ENCODE measurements at regions of chr1 and their contacts with region 1.

Region 1: DNA sequence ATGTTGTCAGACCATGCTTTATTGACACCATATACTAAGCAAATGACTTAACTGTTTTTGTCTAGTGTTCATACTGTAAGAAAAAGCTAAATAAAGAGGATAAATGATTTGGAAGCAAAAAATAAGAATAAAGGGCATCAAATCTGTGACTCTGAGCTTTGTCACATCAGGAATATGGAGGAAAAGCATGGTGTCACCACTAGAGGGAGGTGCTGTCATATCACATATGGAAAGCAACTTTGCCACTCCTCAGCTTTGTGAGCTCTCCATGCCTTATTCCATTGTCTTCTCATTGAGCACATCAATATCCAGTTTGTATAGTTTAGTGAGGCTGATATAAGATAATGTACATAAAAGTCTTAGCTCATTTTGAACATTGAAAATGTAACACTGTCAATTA is 20.8 kb upstream of the GBP1 start:
- DNase-seq: peak; percentile 41
- H3K4me3 Mint-ChIP-seq: no peak overlapping the region
- H3K27ac Mint-ChIP-seq: no peak overlapping the region
- H3K4me1 Mint-ChIP-seq: peaks cover 6% of the 10 kb centered on the region
- H3K27me3 Mint-ChIP-seq: no peaks in the 10 kb centered on the region

Region 2: DNA sequence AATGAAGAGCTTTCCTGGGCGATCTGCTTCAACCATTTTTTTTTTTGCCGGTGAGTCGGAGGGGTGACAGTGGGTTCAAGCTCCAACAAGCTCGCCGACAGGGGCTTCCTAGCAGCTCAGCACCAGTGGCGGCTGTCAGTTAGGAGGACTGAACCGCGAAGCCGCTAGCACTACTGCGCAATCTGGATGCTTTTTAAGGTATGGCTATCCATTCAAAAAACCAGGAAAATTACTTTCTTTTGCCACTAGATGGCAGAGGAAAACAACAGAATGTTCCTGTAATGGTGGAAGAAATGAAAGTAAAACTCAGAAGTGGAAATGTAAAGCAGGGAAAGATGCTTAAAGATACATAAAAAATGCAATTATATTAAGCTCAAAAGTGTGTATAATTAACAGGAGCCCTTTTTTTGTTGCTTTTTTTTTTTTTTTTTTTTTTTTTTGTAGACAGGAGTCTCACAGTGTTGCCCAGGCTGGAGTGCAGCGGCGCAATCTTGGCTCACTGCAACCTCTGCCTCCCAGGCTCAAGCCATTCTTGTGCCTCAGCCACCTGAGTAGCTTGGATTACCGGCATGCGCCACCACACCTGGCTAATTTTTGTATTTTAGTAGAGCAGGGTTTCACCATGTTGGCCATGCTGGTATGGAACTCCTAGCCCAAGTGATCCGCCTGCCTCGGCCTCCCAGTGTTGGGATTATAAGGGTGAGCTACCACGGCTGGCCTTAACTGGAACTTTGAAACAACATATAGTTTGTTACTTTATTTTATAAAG is 101.8 kb before region 1 on chr1:
- CTCF ChIA-PET with region 1: interaction called, 10 read pairs
- POLR2A ChIA-PET with region 1: no interaction called
- DNase-seq: peak; percentile 32
- H3K4me3 Mint-ChIP-seq: peak overlapping the region; percentile 61
- H3K27ac Mint-ChIP-seq: peak overlapping the region; percentile 65
- H3K4me1 Mint-ChIP-seq: peaks cover 83% of the 10 kb centered on the region
- H3K27me3 Mint-ChIP-seq: no peaks in the 10 kb centered on the region

Region 3: GRCh38 chr1:89065079-89065868 is 20.5 kb before region 1 on chr1 and contains the start of gene GBP1:
- CTCF ChIA-PET with region 1: interaction called, 10 read pairs
- POLR2A ChIA-PET with region 1: no interaction called
- DNase-seq: no peak
- H3K4me3 Mint-ChIP-seq: peak within 1 kb of the TSS; percentile 96
- H3K27ac Mint-ChIP-seq: peak within 1 kb of the TSS; percentile 88
- H3K4me1 Mint-ChIP-seq: peaks cover 59% of the 10 kb centered on the region
- H3K27me3 Mint-ChIP-seq: no peaks in the 10 kb centered on the region
- total RNA-seq, gene GBP1: 141 to 144 TPM

Region 4: GRCh38 chr1:89358287-89358893 is 272.6 kb after region 1 on chr1:
- CTCF ChIA-PET with region 1: interaction called, 21 read pairs
- POLR2A ChIA-PET with region 1: no interaction called
- DNase-seq: peak; percentile 86
- H3K4me3 Mint-ChIP-seq: peak overlapping the region; percentile 29
- H3K27ac Mint-ChIP-seq: no peak overlapping the region
- H3K4me1 Mint-ChIP-seq: peaks cover 47% of the 10 kb centered on the region
- H3K27me3 Mint-ChIP-seq: no peaks in the 10 kb centered on the region